Cardiac septum (tissue), 1 donor: ENCODE measurements at regions of chr19 and their contacts with region 1.

Region 1: GRCh38 chr19:43983912-43984686 is at the start of gene ZNF155:
- DNase-seq: peak; percentile 96
- total RNA-seq, gene ZNF155: 6.4 TPM

Region 2: DNA sequence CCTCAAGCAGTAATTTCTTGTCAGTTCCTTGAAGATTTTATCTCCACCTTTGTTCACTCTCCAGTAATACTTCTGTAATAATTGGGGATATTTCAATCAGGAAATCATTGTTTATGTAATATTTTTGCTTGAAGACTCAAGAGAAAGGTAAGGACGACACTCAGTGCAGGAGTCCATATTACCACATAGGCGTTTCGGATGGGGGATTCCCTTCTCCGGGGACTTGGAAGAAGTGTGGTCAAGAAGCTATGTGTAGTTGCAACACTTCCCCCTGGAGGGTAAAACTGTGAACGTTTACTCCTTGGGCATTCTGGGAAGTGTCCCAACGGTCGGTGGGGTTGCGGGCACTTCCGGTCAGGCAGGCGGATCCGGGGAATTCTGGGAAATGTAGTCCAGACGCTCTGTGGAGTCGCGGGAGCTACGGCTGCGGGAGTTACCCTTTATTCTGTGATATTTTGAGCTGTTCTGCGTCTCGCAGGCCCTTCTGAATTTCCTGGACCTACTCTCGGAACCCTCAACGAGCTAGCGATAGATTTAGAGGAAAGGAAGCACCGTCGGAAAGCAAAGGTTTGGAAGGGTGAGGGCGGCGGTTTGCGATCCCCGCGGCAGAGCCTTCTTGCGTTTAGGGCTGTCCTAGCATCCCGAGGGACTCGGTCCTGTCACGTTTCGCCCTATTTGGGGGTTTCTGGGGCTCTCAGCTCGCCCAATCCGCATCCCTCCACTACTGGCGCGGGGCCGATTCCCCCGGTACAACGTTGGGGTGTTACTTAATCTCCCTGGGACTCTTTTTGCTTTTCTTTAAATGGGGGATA is 33.1 kb before region 1 on chr19 and contains the start of gene ZNF221:
- intact Hi-C with region 1: loop called (anchors 1 kb)
- DNase-seq: peak; percentile 92
- total RNA-seq, gene ZNF221: 4.7 TPM

Region 3: GRCh38 chr19:43966079-43966694 is 17.9 kb before region 1 on chr19:
- intact Hi-C with region 1: no loop called
- DNase-seq: no peak

Region 4: DNA sequence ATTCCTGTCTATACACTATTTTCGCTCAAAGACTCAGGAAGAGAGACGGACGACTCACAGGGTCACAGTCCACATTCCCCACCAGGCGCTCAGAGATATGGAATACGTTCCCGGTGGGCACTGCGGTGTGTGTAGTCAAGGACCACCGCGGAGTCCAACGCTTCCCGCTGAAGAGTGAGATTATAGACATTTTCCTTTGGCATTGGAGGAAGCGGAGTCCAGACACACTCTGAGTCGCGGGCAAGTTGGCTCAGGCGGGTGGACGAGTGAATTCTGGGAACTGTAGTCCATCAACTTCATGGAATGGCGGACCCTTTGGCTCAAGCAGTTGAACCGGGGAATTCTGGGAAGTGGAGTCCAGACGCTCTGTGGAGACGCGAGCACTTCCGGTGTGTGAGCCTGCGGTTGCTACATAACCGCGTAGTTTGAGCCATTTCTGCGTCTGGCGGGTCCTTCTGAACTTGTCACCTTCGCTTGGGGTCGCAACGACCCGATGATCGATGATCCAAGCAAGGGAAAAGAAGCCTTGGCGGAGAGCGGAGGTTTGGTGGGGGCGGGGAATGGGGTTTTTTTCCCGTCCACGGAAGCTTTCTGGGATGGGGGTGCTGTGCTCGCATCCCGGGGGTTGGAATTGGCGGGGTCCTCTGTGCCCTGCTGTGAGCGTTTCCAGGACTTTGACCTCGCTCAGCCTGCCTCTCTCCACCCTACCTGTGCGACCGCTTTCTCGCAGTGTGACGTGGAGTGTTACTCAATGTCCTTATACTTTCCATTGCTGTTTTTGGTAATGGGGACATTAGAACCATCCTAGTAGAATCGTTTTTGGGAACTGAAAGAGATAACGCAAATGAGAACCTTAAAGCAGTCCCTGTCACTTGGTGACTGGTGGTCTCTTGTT is 18.7 kb after region 1 on chr19 and contains the start of gene ZNF230:
- intact Hi-C with region 1: loop called (anchors 1 kb)
- DNase-seq: peak; percentile 95
- total RNA-seq, gene ZNF230: 2.3 TPM

Region 5: DNA sequence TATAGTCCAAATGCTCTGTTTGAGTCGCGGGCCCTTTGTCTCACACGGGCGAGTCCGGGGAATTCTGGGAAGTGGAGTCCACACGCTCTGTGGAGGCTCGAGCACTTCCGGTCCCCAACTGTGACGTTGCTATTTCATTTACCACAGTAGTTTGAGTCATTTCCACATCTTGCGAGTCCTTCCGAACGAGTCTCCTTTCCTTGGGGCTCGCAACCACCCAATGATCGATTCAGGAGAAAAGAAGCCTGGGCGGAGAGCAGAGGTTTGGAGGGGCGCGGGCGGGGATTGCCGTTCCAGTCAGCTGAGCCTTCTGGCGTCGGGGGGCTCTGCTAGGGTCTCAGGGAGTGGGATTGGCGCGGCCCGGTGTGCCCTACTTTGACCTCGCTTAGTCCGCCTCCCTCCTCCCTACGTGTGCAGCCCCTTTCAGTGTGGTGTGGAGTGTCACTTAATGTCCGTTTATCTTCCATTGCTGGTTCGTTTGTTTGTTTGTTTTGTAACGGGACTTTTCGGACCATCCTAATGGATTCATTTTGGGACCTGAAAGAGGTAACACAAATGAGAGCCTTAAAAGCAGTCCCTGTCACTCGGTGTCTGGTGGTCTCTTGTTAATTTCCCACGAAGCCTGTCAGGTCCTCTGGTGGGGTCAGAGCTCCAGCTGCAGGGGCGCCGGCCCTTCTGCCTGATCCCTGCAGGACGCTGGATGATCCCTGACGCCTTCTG is 41.3 kb after region 1 on chr19 and contains the start of gene ZNF222:
- intact Hi-C with region 1: no loop called
- DNase-seq: peak; percentile 93
- total RNA-seq, gene ZNF222: 3.6 TPM

Region 6: DNA sequence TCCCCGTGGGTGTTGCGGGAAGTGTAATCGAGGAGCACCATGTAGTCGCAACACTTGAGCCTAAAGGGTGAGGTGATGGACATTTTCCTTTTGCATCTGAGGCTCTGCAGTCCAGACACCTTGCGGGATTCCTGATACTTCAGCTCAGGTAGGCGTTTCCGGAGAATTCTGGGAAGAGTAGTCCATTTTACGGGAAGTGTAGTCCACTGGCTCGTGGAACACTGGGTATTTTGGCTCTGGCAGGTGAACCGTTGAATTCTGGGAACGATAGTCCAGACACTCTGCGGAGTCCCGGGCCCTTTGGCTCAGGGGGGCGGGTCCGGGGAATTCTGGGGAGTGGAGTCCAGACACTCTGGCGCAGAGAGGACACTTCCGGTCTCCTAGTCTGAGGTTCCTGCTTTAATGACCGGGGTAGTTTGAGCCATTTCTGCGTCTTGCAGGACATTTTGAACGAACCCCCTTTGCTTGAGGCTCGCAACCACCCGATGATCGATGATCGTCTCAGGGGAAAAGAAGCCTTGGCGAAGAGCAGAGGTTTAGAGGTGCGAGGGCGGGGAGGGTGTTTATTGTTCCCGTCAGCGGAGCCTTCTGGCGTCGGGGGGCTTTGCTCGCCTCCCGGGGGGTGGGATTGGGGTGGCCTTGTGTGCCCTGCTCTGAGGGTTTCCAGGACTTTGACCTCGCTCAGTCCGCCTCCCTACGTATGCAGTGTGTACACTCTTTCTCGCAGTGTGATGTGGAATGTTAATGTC is 67.7 kb after region 1 on chr19 and contains the start of gene ZNF223:
- intact Hi-C with region 1: loop called (anchors 1 kb)
- DNase-seq: peak; percentile 97
- total RNA-seq, gene ZNF223: 2.2 TPM

Region 7: GRCh38 chr19:44071824-44072542 is 87.9 kb after region 1 on chr19 and contains the start of gene ZNF284:
- intact Hi-C with region 1: loop called (anchors 5 kb)
- DNase-seq: peak; percentile 94
- total RNA-seq, gene ZNF284: 1.4 TPM

Region 8: GRCh38 chr19:44093931-44094765 is 110.0 kb after region 1 on chr19 and contains the start of gene ZNF224:
- intact Hi-C with region 1: loop called (anchors 5 kb)
- DNase-seq: peak; percentile 97
- total RNA-seq, gene ZNF224: 12.9 TPM

Region 9: DNA sequence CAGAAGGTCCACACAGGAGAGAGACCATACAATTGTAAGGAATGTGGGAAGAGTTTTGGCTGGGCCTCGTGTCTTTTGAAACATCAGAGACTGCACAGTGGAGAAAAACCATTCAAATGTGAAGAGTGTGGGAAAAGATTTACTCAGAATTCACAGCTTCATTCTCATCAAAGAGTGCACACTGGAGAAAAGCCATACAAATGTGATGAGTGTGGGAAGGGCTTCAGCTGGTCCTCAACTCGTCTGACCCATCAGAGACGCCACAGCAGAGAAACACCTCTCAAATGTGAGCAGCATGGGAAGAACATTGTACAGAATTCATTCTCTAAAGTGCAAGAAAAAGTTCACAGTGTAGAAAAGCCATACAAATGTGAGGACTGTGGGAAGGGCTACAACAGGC is 123.7 kb after region 1 on chr19:
- intact Hi-C with region 1: no loop called
- DNase-seq: no peak